Activated CD8-positive, alpha-beta memory T cell treated with anti-CD3 and anti-CD28 coated beads, Interleukin-2, amount 10 ng/mL, durations not matched to agents 7 days and 5 days (primary cell): ENCODE measurements at regions of chr19 and their contacts with region 1.

Region 1: DNA sequence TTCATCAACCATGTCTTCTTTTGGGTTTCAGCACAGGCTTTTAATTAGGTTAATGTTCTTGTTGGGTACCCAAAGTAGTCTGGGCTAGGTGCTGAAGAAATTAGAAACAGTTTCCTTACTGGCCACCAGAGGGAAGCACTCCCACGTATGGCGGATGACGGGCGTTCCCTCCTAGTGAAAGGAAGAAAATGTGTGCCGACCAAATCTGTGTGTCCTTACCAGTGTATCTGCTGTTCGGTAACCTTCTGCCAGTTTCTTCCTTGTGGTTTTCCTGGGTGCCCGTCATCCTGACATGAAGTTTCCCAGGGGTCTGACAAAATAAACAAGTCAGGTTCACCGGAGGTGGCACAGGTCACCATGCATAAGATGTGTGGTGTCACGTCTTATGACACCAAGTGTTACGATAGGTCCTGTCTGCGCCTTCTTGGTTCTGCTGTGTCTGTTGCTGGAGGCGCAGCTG is 6.0 kb upstream of the WDR88 start:
- DNase-seq: peak; percentile 66
- ATAC-seq: peak; percentile 90
- H3K4me3 Mint-ChIP-seq: no peak overlapping the region
- H3K27ac Mint-ChIP-seq: no peak overlapping the region
- H3K4me1 Mint-ChIP-seq: peaks cover 4% of the 10 kb centered on the region
- H3K27me3 Mint-ChIP-seq: no peaks in the 10 kb centered on the region

Region 2: DNA sequence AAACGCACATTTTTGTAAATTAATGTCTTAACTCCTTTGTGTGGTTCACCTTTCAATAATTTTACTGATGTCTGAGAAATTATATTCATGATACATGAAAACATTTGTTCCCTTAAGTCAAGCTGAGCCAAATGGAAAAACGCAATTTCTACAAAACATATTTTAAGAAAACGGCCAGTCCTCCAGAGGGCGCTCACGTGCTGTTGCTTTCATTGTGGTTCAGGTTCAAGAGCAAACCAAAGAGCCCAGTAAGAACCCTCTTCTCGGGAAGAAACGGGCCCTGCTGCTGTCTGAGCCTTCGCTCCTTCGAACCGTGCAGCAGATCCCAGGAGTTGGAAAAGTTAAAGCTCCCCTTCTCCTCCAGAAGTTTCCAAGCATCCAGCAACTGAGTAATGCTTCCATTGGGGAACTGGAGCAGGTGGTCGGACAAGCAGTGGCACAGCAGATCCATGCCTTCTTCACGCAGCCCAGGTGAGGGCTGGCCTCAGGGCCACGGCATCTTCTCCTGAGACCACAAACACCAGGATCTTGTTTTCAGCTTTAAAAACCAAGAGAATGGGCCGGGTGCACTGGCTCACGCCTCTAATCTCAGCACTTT is 149.7 kb before region 1 on chr19:
- CTCF ChIA-PET with region 1: interaction called, 14 read pairs
- DNase-seq: peak; percentile 84
- ATAC-seq: no peak
- H3K4me3 Mint-ChIP-seq: no peak overlapping the region
- H3K27ac Mint-ChIP-seq: peak overlapping the region; percentile 28
- H3K4me1 Mint-ChIP-seq: peaks cover 20% of the 10 kb centered on the region
- H3K27me3 Mint-ChIP-seq: no peaks in the 10 kb centered on the region

Region 3: GRCh38 chr19:33235269-33235995 is 109.5 kb after region 1 on chr19:
- CTCF ChIA-PET with region 1: interaction called, 10 read pairs
- DNase-seq: peak; percentile 82
- ATAC-seq: peak; percentile 90
- H3K4me3 Mint-ChIP-seq: no peak overlapping the region
- H3K27ac Mint-ChIP-seq: peak overlapping the region; percentile 25
- H3K4me1 Mint-ChIP-seq: peaks cover 11% of the 10 kb centered on the region
- H3K27me3 Mint-ChIP-seq: peaks cover 18% of the 10 kb centered on the region